ENCODE measurements at regions of chr1 and their contacts with region 1.

Region 1: GRCh38 chr1:206725109-206725963 is 40.6 kb downstream of the MAPKAPK2 start:
- DNase-seq: peak; percentile 83
- ATAC-seq: peak; percentile 57
- H3K4me3 Mint-ChIP-seq: no peak overlapping the region
- H3K27ac Mint-ChIP-seq: no peak overlapping the region
- H3K4me1 Mint-ChIP-seq: peaks cover 57% of the 10 kb centered on the region
- H3K27me3 Mint-ChIP-seq: no peaks in the 10 kb centered on the region
- CTCF ChIP-seq: peak; percentile 6

Region 2: DNA sequence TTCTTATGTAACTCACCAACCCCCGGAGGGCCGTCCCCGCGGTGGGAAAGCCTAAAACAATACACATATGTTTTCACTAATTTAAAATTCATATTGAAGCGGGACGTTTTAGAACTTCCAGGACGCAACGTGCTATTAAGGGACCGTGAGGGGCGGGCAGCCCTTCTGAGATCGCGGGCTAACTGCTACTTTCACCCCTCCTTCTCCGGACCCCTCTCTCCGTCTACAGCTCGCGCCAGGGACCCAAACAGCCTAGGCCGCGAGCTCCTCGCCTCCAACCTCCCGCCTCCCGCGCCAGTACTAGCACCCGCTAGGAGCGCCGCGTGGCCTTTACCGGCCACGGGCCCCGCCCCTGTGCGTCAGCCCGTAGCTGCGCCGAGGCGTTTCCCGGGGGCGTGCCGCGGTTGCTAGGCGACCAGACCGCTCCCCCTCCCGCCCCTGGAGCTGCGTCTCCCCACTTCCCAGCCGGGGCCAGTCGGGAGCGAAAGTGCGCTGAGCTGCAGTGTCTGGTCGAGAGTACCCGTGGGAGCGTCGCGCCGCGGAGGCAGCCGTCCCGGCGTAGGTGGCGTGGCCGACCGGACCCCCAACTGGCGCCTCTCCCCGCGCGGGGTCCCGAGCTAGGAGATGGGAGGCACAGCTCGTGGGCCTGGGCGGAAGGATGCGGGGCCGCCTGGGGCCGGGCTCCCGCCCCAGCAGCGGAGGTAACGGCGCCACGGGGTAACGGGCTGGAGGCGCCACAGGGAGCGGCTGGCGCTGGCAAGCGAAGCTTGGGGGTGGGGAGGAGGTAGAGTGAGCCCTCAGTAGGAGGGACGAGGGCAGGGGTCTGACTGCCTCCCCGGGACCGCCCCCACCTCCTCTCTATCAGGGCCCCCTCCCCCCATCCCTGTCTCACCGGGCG is 90.0 kb before region 1 on chr1 and contains the start of gene DYRK3:
- CTCF ChIA-PET with region 1: interaction called, 11 read pairs
- POLR2A ChIA-PET with region 1: interaction called, 3 read pairs
- intact Hi-C with region 1: no loop called
- DNase-seq: peak; percentile 93
- ATAC-seq: peak; percentile 93
- H3K4me3 Mint-ChIP-seq: peak within 1 kb of the TSS; percentile 78
- H3K27ac Mint-ChIP-seq: peak within 1 kb of the TSS; percentile 88
- H3K4me1 Mint-ChIP-seq: peaks cover 25% of the 10 kb centered on the region
- H3K27me3 Mint-ChIP-seq: peaks cover 28% of the 10 kb centered on the region
- CTCF ChIP-seq: no peak
- total RNA-seq, gene DYRK3: 4.7 to 4.9 TPM

Region 3: GRCh38 chr1:206766251-206766856 is 41.0 kb after region 1 on chr1:
- CTCF ChIA-PET with region 1: interaction called, 53 read pairs
- POLR2A ChIA-PET with region 1: no interaction called
- intact Hi-C with region 1: no loop called
- DNase-seq: peak; percentile 87
- ATAC-seq: peak; percentile 75
- H3K4me3 Mint-ChIP-seq: peak overlapping the region; percentile 47
- H3K27ac Mint-ChIP-seq: peak overlapping the region; percentile 65
- H3K4me1 Mint-ChIP-seq: peaks cover 65% of the 10 kb centered on the region
- H3K27me3 Mint-ChIP-seq: peaks cover 3% of the 10 kb centered on the region
- CTCF ChIP-seq: no peak

Region 4: DNA sequence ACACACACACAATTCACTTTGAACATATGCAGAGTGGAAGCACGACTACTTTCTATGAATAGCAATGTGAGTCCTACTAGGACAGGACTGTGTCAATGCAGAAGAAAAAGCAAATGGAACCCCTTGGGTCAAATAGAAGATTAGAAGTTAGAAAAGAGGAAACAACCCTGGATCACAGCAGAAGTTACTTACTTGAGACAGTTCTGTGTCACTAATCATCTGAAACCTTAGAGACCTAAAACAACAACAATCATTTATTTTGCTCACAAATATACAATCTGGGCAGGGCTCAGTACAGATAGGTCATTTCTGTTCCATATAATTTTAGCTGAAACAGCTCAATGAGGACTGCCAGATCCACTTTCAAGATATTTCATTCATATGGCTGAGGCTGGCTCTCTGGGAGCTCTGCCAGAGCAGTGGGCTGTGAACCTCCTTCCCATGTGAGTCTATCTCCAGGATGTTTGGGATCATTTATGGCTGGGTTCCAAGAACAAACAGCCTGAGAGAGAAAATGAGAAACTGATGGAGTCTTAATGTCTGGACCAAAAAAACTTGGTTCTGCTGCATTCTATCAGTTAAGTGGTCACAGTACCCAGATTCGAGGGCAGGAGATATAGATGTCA is 89.5 kb after region 1 on chr1:
- CTCF ChIA-PET with region 1: interaction called, 628 read pairs
- POLR2A ChIA-PET with region 1: interaction called, 4 read pairs
- intact Hi-C with region 1: no loop called
- DNase-seq: no peak
- ATAC-seq: no peak
- H3K4me3 Mint-ChIP-seq: no peak overlapping the region
- H3K27ac Mint-ChIP-seq: no peak overlapping the region
- H3K4me1 Mint-ChIP-seq: peaks cover 24% of the 10 kb centered on the region
- H3K27me3 Mint-ChIP-seq: no peaks in the 10 kb centered on the region
- CTCF ChIP-seq: no peak

Region 5: DNA sequence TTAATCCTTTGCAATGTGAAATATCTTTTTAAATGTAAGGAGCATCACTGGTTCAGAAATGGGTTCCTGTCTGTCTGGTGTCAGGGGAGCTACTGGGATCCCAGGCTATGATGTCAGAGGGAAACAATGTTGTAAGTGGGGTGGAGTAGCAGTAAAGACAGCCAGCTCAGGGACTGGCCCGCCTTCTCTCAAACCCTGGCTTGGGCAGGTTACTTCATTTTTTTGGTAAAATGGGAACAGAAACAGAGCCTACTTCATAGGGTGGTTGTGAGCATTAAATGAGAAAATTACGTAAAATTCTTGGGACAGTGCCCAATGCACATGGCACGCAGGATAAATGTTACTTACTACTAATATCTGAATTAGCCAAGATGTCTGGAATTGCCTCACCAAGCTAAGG is 109.4 kb after region 1 on chr1:
- CTCF ChIA-PET with region 1: interaction called, 12 read pairs
- POLR2A ChIA-PET with region 1: no interaction called
- intact Hi-C with region 1: no loop called
- DNase-seq: no peak
- ATAC-seq: no peak
- H3K4me3 Mint-ChIP-seq: no peak overlapping the region
- H3K27ac Mint-ChIP-seq: no peak overlapping the region
- H3K4me1 Mint-ChIP-seq: peaks cover 25% of the 10 kb centered on the region
- H3K27me3 Mint-ChIP-seq: peaks cover 4% of the 10 kb centered on the region
- CTCF ChIP-seq: no peak

Region 6: DNA sequence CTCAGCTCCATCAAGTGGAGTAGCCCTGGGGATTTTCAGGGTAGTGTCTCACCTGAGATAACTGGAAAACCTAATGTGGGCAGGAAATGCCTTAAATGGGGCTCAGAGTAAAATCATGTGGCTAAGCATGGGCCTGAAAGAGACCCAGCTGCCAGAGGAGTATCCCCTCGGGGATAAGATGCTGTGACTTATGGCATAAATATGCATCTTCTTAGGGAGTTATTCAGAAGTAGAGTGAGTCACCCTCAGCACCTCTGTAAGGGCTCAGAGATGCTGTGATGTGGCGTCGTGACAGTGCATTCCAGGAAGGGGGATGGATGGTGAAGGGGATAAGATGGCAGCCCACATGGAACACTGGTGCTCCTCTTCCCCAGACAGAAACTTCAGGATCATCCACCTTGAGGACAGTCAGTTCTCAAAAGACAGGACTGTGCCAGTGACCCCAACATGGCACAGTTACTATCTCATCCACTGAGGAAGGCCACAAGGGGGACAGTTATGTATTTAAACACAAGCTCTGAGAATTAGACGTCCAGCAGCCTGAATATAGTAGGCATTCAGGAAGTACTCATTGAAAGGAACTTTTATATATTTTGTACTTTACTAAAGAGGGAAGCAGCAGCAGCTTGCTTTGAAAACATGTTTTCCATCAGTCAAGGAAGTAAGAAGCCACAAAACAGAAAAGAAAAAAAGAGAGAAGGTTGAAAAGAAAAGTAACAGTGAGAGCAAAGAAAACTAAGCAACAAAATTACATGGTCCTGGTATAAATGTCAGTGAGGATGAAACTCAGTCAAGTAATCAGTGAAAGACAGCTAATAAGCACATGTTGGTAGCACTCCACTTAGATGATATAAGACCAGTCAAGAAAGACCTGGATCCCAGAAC is 180.2 kb after region 1 on chr1:
- CTCF ChIA-PET with region 1: interaction called, 35 read pairs
- POLR2A ChIA-PET with region 1: no interaction called
- intact Hi-C with region 1: no loop called
- DNase-seq: peak; percentile 70
- ATAC-seq: peak; percentile 90
- H3K4me3 Mint-ChIP-seq: peak overlapping the region; percentile 34
- H3K27ac Mint-ChIP-seq: peak overlapping the region; percentile 96
- H3K4me1 Mint-ChIP-seq: peaks cover 79% of the 10 kb centered on the region
- H3K27me3 Mint-ChIP-seq: no peaks in the 10 kb centered on the region
- CTCF ChIP-seq: no peak

Region 7: GRCh38 chr1:206935491-206936067 is 210.2 kb after region 1 on chr1:
- CTCF ChIA-PET with region 1: interaction called, 26 read pairs
- POLR2A ChIA-PET with region 1: no interaction called
- intact Hi-C with region 1: no loop called
- DNase-seq: peak; percentile 71
- ATAC-seq: peak; percentile 58
- H3K4me3 Mint-ChIP-seq: no peak overlapping the region
- H3K27ac Mint-ChIP-seq: no peak overlapping the region
- H3K4me1 Mint-ChIP-seq: peaks cover 24% of the 10 kb centered on the region
- H3K27me3 Mint-ChIP-seq: no peaks in the 10 kb centered on the region
- CTCF ChIP-seq: peak; percentile 75